GM12878 (cell line): ENCODE measurements at regions of chr3 and their contacts with region 1.

Region 1: DNA sequence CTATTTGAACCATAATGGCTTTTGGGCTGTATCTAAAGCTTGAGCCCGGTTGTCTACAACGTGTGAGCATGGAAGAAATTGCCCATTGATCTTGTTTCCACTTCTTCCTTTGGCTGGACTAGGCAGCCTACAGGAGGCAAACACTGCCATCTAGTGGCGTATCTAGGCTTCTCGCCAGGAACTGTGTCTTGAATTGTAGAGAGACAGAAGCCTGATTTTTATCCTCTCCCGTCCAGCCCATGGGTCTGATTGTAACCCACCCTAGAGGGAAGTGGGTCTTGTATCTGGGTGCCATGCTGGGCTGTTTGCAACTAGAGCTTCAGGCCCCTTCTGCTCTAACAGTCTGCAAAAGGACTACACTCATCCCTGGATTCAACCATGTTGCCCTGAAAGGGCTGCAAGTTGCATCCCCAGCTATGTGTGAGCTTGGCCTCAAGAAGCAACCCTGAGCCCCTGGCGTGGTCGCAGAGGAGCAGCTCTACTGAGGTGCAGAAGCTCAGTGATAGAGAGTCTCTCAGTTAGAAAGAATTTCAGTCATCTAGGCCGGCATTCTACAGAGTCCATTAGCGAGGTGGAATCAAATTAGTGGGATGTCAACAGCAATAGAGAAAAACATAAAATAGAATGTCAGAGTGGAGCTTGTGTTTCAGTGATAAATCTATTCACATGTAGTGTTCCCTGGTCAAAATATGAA is 170.2 kb upstream of the UMPS start:
- DNase-seq: no peak
- ATAC-seq: peak; percentile 95
- H3K4me3 ChIP-seq: no peak overlapping the region
- H3K27ac ChIP-seq: no peak overlapping the region
- H3K4me1 ChIP-seq: no peaks in the 10 kb centered on the region
- H3K27me3 ChIP-seq: 0 out of 4 replicates have a peak, but pooled peaks cover 0 to 2% of the 10 kb centered on the region in 2 experiments
- CTCF ChIP-seq: peak; percentile 87 to 90 (median 88)
- EP300 ChIP-seq: no peak
- POLR2A ChIP-seq: no peak
- RAD21 ChIP-seq: peak; percentile 77

Region 2: GRCh38 chr3:124467980-124468902 is 91.8 kb before region 1 on chr3:
- CTCF ChIA-PET with region 1: interaction called, 13 read pairs
- POLR2A ChIA-PET with region 1: no interaction called
- RAD21 ChIA-PET with region 1: no interaction called
- SMC1A ChIA-PET with region 1: no interaction called
- in situ Hi-C with region 1: no loop called
- intact Hi-C with region 1: no loop called
- DNase-seq: no peak
- ATAC-seq: peak; percentile 92
- H3K4me3 ChIP-seq: no peak overlapping the region
- H3K27ac ChIP-seq: no peak overlapping the region
- H3K4me1 ChIP-seq: no peaks in the 10 kb centered on the region
- H3K27me3 ChIP-seq: no peaks in the 10 kb centered on the region; a peak in 1 of 4 replicates
- CTCF ChIP-seq: peak; percentile 93 to 98 (median 94); a peak in 5 of 6 replicates
- EP300 ChIP-seq: no peak
- POLR2A ChIP-seq: no peak
- RAD21 ChIP-seq: peak; percentile 96

Region 3: DNA sequence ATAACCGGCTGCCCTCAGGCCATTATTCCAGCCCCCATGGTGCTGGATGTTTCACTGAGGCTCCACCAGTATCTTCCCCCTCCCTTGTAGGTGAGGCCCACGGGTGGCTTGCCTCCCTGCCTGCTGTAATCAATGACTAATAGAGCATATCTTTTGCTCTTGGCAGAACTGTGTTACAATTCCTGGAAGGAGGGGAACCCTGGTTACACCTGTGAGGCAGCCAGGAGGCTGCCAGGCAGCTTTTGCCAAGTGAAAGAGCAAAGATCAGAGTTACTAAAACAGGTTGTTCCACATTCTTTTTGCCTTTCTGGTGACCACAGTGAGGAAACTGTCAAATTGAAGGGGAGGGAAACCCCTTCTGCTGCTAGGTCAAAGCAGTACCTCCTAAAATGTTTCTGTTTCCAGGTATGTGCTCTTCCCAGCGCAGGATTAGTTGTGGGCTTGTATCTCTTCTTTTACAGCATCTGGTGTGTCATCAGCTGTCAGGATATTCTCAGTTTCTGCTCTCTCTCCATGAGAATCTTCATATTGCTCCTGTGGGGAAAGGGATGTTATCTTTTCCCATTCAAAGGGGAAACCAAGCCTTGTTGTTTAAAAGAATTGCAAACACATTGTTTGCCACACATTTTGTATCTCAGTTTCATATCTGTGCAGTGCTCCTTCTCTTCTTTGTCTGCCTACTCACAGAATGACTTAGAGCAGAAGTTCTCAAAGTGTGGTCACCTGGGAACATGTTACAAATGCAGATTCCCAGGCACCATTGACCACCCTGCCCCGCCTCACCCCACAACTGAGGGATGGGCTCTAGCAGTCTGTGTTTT is 32.8 kb after region 1 on chr3:
- CTCF ChIA-PET with region 1: interaction called, 5 read pairs
- POLR2A ChIA-PET with region 1: no interaction called
- RAD21 ChIA-PET with region 1: no interaction called
- SMC1A ChIA-PET with region 1: interaction called, 11 read pairs
- in situ Hi-C with region 1: no loop called
- intact Hi-C with region 1: no loop called
- DNase-seq: peak; percentile 70
- ATAC-seq: peak; percentile 91
- H3K4me3 ChIP-seq: peak overlapping the region; percentile 7; the same call in 1 of the 2 replicates
- H3K27ac ChIP-seq: peak overlapping the region; percentile 67
- H3K4me1 ChIP-seq: peaks cover 22% of the 10 kb centered on the region
- H3K27me3 ChIP-seq: no peaks in the 10 kb centered on the region
- CTCF ChIP-seq: no peak
- EP300 ChIP-seq: peak; percentile 11 to 14; a peak in 2 of 4 replicates
- POLR2A ChIP-seq: no peak
- RAD21 ChIP-seq: 0 out of 2 replicates have a peak, but pooled peaks have one; percentile 4

Region 4: GRCh38 chr3:124650798-124651197 is 90.8 kb after region 1 on chr3:
- CTCF ChIA-PET with region 1: interaction called, 18 read pairs
- POLR2A ChIA-PET with region 1: no interaction called
- RAD21 ChIA-PET with region 1: no interaction called
- SMC1A ChIA-PET with region 1: interaction called, 18 read pairs
- in situ Hi-C with region 1: no loop called
- intact Hi-C with region 1: no loop called
- DNase-seq: peak; percentile 65
- ATAC-seq: peak; percentile 89
- H3K4me3 ChIP-seq: no peak overlapping the region
- H3K27ac ChIP-seq: peak overlapping the region; percentile 49
- H3K4me1 ChIP-seq: peaks cover 31% of the 10 kb centered on the region
- H3K27me3 ChIP-seq: no peaks in the 10 kb centered on the region
- CTCF ChIP-seq: no peak
- EP300 ChIP-seq: peak; percentile 92 to 96; a peak in 3 of 4 replicates
- POLR2A ChIP-seq: no peak
- RAD21 ChIP-seq: no peak

Region 5: GRCh38 chr3:124688581-124689454 is 128.8 kb after region 1 on chr3:
- CTCF ChIA-PET with region 1: interaction called, 577 read pairs
- POLR2A ChIA-PET with region 1: interaction called, 3 read pairs
- RAD21 ChIA-PET with region 1: interaction called, 199 read pairs
- SMC1A ChIA-PET with region 1: interaction called, 309 read pairs
- in situ Hi-C with region 1: no loop called
- intact Hi-C with region 1: loop called (anchors 1 kb)
- DNase-seq: peak; percentile 30
- ATAC-seq: peak; percentile 94
- H3K4me3 ChIP-seq: no peak overlapping the region
- H3K27ac ChIP-seq: no peak overlapping the region
- H3K4me1 ChIP-seq: no peaks in the 10 kb centered on the region
- H3K27me3 ChIP-seq: no peaks in the 10 kb centered on the region
- CTCF ChIP-seq: peak; percentile 75 to 95 (median 79); a peak in 5 of 6 replicates
- EP300 ChIP-seq: no peak
- POLR2A ChIP-seq: no peak
- RAD21 ChIP-seq: peak; percentile 91

Region 6: DNA sequence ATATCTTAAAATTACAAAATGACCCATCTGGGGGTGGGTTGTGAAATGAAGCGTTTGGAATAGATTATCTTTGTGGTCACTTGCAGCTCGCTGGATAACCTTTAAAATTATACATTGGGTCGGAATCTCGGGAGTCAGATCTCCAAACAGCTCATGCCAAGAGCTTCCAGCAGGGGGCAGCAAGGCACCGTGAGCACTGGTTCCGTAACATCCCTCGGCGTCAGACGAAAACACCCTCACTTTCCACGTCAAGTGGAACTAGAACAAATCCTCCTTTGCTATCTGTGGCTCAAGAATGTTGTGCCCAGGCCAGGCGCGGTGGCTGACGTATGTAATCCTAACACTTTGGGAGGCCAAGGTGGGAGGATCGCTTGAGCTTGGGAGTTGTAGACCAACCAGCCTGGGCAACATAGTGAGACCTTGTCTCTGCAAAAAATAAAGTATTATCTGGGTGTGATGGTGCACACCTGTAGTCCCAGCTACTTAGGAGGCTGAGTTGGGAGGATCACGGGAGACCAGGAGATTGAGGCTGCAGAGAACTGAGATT is 201.3 kb after region 1 on chr3:
- CTCF ChIA-PET with region 1: interaction called, 16 read pairs
- POLR2A ChIA-PET with region 1: no interaction called
- RAD21 ChIA-PET with region 1: interaction called, 8 read pairs
- SMC1A ChIA-PET with region 1: interaction called, 14 read pairs
- in situ Hi-C with region 1: no loop called
- intact Hi-C with region 1: no loop called
- DNase-seq: peak; percentile 49
- ATAC-seq: peak; percentile 91
- H3K4me3 ChIP-seq: no peak overlapping the region
- H3K27ac ChIP-seq: no peak overlapping the region
- H3K4me1 ChIP-seq: no peaks in the 10 kb centered on the region
- H3K27me3 ChIP-seq: no peaks in the 10 kb centered on the region; a peak in 2 of 4 replicates
- CTCF ChIP-seq: peak; percentile 94 to 96 (median 94)
- EP300 ChIP-seq: no peak
- POLR2A ChIP-seq: no peak
- RAD21 ChIP-seq: peak; percentile 93